AG04449 (cell line): ENCODE measurements at regions of chr14 and their contacts with region 1.

Region 1: DNA sequence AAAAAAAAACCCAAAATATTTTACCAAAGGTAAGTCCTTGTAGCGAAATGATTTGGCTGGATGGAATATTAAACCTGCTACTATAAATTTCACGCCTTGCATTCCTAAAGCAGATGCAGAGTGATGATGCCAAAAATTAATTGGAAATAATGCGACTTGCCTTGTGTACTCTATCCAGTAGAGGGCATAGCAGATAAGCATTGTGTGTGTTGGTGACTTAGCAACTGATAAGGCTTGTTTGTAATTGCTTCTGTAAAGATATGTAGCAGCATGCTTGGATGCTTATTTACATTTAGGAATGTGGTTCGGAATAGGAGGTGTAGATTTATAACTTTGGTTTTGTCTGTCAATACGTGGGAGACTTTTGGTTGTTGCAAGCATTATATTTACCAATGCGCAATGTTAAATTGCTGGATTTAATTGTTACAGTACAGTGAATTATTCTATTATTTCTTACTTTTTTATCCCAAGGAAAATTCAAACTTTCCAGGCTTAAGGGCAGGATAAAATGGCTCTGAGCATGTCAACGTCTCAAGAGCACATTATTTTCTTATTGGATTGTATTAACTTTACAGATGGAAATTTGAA is 80.5 kb downstream of the TMEM260 start:
- DNase-seq: peak; percentile 7
- H3K4me3 ChIP-seq: no peak overlapping the region
- CTCF ChIP-seq: peak; percentile 59

Region 2: GRCh38 chr14:56027916-56028712 is 631.9 kb before region 1 on chr14:
- CTCF ChIA-PET with region 1: no interaction called
- POLR2A ChIA-PET with region 1: no interaction called
- DNase-seq: no peak
- H3K4me3 ChIP-seq: no peak overlapping the region
- CTCF ChIP-seq: no peak

Region 3: GRCh38 chr14:57293866-57294837 is 634.1 kb after region 1 on chr14:
- CTCF ChIA-PET with region 1: interaction called, 15 read pairs
- POLR2A ChIA-PET with region 1: no interaction called
- DNase-seq: no peak
- H3K4me3 ChIP-seq: no peak overlapping the region
- CTCF ChIP-seq: no peak

Region 4: DNA sequence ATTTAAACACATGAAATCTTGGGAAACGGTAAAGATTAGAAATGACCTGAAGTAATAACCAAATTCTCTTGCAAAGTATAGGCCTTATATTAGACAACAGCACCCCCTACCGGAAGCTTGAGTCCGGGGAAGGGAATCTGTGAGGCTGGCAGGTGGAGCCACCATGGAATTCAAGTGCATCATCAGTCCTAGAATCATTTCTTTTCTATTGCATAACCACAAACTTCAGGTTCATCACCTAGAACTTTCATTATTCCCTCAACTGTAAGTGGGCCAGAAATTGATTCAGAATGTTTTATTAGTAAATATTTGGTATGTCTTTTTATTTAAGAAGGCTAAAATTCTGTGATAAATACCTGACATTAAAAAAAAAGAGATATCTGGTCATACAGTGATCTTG is 657.3 kb after region 1 on chr14:
- CTCF ChIA-PET with region 1: interaction called, 16 read pairs
- POLR2A ChIA-PET with region 1: no interaction called
- DNase-seq: peak; percentile 21
- H3K4me3 ChIP-seq: no peak overlapping the region
- CTCF ChIP-seq: peak; percentile 66